HCT116 (cell line): ENCODE measurements at regions of chr6 and their contacts with region 1.

Region 1: GRCh38 chr6:33276864-33277662 is at the start of gene B3GALT4:
- DNase-seq: no peak
- ATAC-seq: peak; percentile 65
- H3K4me3 ChIP-seq: peak within 1 kb of the TSS; percentile 34 to 99
- H3K27ac ChIP-seq: peak within 1 kb of the TSS; percentile 82
- H3K4me1 ChIP-seq: peaks cover 43 to 68% of the 10 kb centered on the region in 2 experiments
- H3K27me3 ChIP-seq: no peaks in the 10 kb centered on the region
- CTCF ChIP-seq: peak in 2 of 3 experiments; percentile 46 to 63; a peak in 4 of 6 replicates
- POLR2A ChIP-seq: peak; percentile 81
- RAD21 ChIP-seq: no peak
- total RNA-seq, gene B3GALT4: 1.9 TPM

Region 2: GRCh38 chr6:33288921-33289748 is 12.1 kb after region 1 on chr6 and contains the starts of genes PFDN6 and WDR46:
- CTCF ChIA-PET with region 1: interaction called, 7 read pairs
- POLR2A ChIA-PET with region 1: interaction called, 10 read pairs
- RAD21 ChIA-PET with region 1: no interaction called
- intact Hi-C with region 1: no loop called
- DNase-seq: peak; percentile 83
- ATAC-seq: peak; percentile 94
- H3K4me3 ChIP-seq: peak within 1 kb of the TSS; percentile 97
- H3K27ac ChIP-seq: peak within 1 kb of the TSS; percentile 67
- H3K4me1 ChIP-seq: peaks cover 10 to 15% of the 10 kb centered on the region in 2 experiments
- H3K27me3 ChIP-seq: no peaks in the 10 kb centered on the region
- CTCF ChIP-seq: no peak
- POLR2A ChIP-seq: peak; percentile 59
- RAD21 ChIP-seq: no peak
- total RNA-seq, gene PFDN6: 90.5 TPM
- total RNA-seq, gene WDR46: 90.6 TPM

Region 3: DNA sequence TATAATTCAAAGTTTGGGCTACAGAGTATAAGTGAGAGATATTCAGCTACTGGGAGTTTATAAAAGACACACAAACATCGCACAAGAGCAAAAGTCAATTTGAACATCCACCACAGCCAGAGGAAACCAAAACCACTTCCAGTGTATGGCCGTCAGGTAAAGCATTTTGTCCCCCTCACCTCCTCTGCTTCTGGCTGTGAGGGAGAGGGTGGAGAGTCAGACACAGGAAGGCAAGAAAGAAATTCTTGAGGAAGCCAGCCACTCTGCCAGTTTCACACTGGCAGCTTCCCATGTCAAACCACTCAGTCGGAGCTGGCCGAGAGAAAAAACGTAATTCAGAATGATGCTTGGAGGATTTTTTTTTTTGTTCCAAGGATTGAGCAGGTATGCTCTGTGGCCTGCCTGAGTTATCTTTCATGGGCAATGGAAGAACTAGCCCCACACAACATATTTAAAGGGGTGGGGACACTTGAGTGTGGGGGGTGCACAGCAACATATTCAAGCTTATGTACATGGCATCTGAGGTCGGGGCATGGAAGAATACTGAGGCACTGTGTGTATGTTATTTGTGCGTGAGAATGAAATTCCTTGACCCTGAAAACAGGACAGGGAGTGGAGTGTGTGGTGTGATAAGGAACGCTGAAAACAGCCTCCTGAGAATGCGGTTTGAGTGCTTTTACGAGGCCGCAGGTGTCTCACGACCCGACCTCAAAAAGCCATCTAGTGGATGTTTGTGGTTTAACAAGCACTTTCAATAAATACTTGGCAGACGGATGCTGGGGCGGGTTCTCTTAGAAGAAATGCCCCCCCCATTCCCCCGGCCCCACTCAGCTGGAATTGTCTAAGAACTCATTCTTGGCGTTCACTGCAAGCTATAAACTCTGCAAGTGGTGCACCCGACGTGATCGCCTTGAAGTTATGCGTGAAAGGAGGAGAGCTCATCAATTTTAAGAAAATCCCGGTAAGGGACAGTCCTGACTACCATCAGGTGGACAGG is 67.9 kb after region 1 on chr6:
- CTCF ChIA-PET with region 1: interaction called, 3 read pairs
- POLR2A ChIA-PET with region 1: no interaction called
- RAD21 ChIA-PET with region 1: no interaction called
- intact Hi-C with region 1: loop called (anchors 1 kb)
- DNase-seq: peak; percentile 74
- ATAC-seq: peak; percentile 80
- H3K4me3 ChIP-seq: no peak overlapping the region
- H3K27ac ChIP-seq: no peak overlapping the region
- H3K4me1 ChIP-seq: peaks cover 8 to 10% of the 10 kb centered on the region in 2 experiments
- H3K27me3 ChIP-seq: peaks cover 27% of the 10 kb centered on the region; the same call in 1 of the 2 replicates
- CTCF ChIP-seq: peak; percentile 46 to 58 (median 50); a peak in 4 of 6 replicates
- POLR2A ChIP-seq: no peak
- RAD21 ChIP-seq: peak; percentile 63

Region 4: DNA sequence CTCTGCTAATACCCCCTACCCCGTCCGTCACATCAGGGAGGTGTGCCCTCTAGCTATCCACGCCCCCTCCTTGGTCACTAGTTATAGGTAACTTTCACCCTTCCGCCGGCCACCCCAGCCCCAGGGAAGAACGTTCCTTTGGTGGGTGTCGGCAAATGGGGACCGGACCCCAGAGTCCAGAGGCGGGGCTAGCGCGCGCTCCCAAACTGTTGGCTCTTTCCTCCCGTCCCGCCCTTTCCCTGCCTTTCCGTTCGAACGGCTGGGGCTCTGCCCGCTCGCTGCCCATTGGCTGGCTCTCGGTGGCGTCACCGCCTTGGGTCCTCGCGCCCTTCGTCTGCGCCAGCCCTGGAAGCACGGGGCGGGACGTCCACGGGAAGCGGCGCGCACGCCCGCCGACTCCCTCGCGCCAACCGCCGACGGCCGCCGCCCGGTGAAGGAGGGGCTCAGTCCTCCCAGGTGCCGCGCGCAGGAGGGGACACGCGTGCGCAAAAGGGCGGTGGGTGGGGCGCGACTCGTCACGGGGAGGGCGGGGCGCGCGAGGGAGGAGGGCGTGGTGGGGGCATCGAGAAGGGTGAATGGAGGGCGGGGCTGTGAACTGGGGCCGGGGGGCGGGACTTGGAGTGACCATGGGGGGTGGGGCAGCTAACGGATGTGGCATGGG is 133.1 kb after region 1 on chr6:
- CTCF ChIA-PET with region 1: interaction called, 3 read pairs
- POLR2A ChIA-PET with region 1: interaction called, 5 read pairs
- RAD21 ChIA-PET with region 1: no interaction called
- intact Hi-C with region 1: loop called (anchors 1 kb)
- DNase-seq: peak; percentile 95
- ATAC-seq: peak; percentile 91
- H3K4me3 ChIP-seq: peak overlapping the region; percentile 67 to 77
- H3K27ac ChIP-seq: peak overlapping the region; percentile 78
- H3K4me1 ChIP-seq: peaks cover 5 to 18% of the 10 kb centered on the region in 2 experiments; a peak in 3 of 4 replicates
- H3K27me3 ChIP-seq: no peaks in the 10 kb centered on the region
- CTCF ChIP-seq: no peak
- POLR2A ChIP-seq: no peak
- RAD21 ChIP-seq: no peak